Activated naive CD4-positive, alpha-beta T cell treated with anti-CD3 and anti-CD28 coated beads for 36 hours (primary cell): ENCODE measurements at regions of chr4 and their contacts with region 1.

Region 1: GRCh38 chr4:106502106-106502699 is 133.6 kb upstream of the GIMD1 start:
- DNase-seq: peak; percentile 67
- H3K4me3 Mint-ChIP-seq: no peak overlapping the region
- H3K27ac Mint-ChIP-seq: no peak overlapping the region
- H3K4me1 Mint-ChIP-seq: peaks cover 4% of the 10 kb centered on the region
- H3K27me3 Mint-ChIP-seq: peaks cover 20% of the 10 kb centered on the region

Region 2: GRCh38 chr4:105520817-105521790 is 981.1 kb before region 1 on chr4:
- CTCF ChIA-PET with region 1: no interaction called
- intact Hi-C with region 1: loop called (anchors 2 kb)
- DNase-seq: peak; percentile 38
- H3K4me3 Mint-ChIP-seq: no peak overlapping the region
- H3K27ac Mint-ChIP-seq: no peak overlapping the region
- H3K4me1 Mint-ChIP-seq: no peaks in the 10 kb centered on the region
- H3K27me3 Mint-ChIP-seq: peaks cover 10% of the 10 kb centered on the region

Region 3: GRCh38 chr4:106238820-106239420 is 263.3 kb before region 1 on chr4:
- CTCF ChIA-PET with region 1: no interaction called
- intact Hi-C with region 1: loop called (anchors 1 kb)
- DNase-seq: no peak
- H3K4me3 Mint-ChIP-seq: no peak overlapping the region
- H3K27ac Mint-ChIP-seq: no peak overlapping the region
- H3K4me1 Mint-ChIP-seq: no peaks in the 10 kb centered on the region
- H3K27me3 Mint-ChIP-seq: no peaks in the 10 kb centered on the region

Region 4: DNA sequence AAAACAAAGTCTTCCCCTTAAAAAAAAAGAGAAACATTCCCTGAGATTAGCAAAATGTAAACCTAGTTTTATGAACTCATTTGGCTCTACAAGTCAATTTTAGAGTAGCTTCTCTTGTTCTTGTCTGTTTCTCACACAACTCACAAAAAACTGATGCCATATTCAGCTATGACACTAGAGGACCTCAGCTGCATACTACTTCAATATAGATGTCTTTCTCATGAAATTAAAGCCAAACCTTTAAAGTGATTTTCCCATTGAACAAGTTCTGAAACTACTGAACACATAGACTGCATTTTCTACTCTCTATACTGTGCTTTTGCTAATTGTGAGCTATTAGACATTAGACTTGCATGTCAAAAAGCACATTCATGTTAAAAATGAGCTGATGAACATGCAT is 236.0 kb before region 1 on chr4:
- CTCF ChIA-PET with region 1: interaction called, 6 read pairs
- intact Hi-C with region 1: loop called (anchors 1 kb)
- DNase-seq: no peak
- H3K4me3 Mint-ChIP-seq: no peak overlapping the region
- H3K27ac Mint-ChIP-seq: no peak overlapping the region
- H3K4me1 Mint-ChIP-seq: peaks cover 4% of the 10 kb centered on the region
- H3K27me3 Mint-ChIP-seq: no peaks in the 10 kb centered on the region

Region 5: DNA sequence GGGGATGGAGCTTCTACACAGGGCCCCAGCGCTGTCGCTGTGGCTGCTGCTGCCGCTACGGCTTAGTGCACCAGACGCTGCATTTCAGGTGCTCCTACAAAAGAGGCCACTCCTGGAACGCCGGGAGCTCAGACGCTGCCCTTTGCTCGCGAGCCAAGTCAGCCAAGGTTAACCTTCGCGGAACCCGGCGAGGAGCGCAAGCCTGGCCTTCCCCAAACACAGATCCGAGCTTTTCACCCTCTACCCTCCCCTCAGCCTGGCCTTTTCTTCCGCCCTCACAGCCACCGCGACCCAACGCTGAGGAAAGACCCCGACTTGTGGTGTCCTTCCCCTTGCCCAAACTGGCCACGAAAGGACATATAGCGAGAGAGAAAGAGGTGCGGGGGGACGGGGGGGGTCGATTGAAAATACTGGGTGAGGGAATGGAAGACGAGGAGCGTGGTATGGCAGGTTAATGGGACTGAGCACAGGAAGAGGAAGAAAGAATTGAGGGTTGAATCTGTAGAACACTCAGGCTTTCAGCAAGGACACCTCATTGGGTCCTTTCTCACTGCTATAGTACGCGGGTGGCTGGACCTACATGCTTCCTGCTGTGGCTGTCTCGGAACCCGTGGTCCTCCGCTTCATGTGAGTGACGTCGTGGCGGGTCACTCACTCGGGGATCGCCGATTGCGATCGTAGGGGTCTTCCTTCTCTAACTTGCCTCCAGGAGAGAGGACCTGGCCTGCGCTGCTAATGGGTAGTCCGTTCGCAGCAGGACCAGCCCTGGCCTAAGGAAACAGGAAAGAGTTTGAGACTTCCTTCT is 186.0 kb before region 1 on chr4 and contains the starts of genes AIMP1 and TBCK:
- CTCF ChIA-PET with region 1: no interaction called
- intact Hi-C with region 1: loop called (anchors 1 kb)
- DNase-seq: peak; percentile 90
- H3K4me3 Mint-ChIP-seq: no peak within 1 kb of the TSS
- H3K27ac Mint-ChIP-seq: no peak within 1 kb of the TSS
- H3K4me1 Mint-ChIP-seq: peaks cover 45% of the 10 kb centered on the region
- H3K27me3 Mint-ChIP-seq: no peaks in the 10 kb centered on the region
- total RNA-seq, gene AIMP1: 49.7 to 52.0 TPM
- total RNA-seq, gene TBCK: 19.4 to 21.6 TPM

Region 6: DNA sequence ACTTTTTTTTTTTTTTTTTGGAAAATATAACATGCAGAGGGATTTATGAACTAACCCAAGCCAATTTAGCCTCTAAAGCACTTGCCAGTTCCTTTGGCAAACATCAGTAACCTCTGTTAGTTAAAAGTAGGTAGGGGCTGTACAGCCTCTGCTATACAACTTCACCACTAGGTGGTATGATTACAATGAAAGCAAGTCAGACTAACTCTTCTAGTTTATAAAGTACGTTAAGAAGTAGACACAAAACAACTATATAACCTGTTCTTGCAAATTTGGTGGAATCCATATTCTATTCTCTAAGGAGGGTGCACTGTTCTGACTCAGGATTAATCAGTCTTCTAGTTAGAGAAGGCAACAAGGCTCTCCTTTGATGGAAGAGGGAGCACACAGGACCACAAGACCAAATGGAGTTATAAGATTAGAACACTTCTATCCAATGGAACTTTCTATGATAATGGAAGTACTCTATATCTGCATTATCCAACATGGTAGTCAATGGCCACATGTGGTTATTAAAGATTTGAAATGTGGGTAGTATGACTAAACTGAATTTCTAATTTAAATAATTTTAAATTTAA is 173.1 kb before region 1 on chr4:
- CTCF ChIA-PET with region 1: no interaction called
- intact Hi-C with region 1: loop called (anchors 1 kb)
- DNase-seq: no peak
- H3K4me3 Mint-ChIP-seq: no peak overlapping the region
- H3K27ac Mint-ChIP-seq: no peak overlapping the region
- H3K4me1 Mint-ChIP-seq: peaks cover 7% of the 10 kb centered on the region
- H3K27me3 Mint-ChIP-seq: no peaks in the 10 kb centered on the region

Region 7: DNA sequence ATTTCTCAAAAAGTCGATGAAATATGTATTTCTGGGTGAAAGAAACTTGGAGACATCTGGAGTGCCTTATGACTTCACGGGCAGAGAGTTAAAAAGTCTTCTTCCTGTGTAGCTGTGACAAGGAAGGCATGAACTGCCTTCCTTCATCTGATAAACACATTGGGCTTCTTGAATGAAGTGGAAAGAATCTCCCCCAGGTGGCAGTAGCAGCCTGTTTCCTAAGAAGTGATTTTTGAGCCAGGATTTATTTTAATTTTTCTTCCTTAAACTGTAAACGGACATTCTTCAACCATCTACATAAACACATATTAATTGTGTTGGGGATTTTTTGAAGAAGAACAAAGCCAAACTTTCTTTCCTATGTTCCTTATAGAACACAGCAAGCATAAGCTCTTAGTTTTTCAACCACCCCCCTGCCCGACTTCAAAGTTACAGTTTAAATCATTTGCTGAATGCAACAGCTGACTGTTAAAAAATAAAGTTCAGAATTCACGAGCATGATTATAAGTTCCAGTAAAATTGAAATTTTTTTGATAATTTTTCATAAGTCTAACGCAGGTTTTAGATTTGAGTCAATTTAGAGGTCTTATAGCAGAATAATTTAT is 132.6 kb before region 1 on chr4:
- CTCF ChIA-PET with region 1: interaction called, 7 read pairs
- intact Hi-C with region 1: loop called (anchors 1 kb)
- DNase-seq: peak; percentile 41
- H3K4me3 Mint-ChIP-seq: no peak overlapping the region
- H3K27ac Mint-ChIP-seq: no peak overlapping the region
- H3K4me1 Mint-ChIP-seq: no peaks in the 10 kb centered on the region
- H3K27me3 Mint-ChIP-seq: peaks cover 22% of the 10 kb centered on the region